H1 (cell line): ENCODE measurements at regions of chr3 and their contacts with region 1.

Region 1: DNA sequence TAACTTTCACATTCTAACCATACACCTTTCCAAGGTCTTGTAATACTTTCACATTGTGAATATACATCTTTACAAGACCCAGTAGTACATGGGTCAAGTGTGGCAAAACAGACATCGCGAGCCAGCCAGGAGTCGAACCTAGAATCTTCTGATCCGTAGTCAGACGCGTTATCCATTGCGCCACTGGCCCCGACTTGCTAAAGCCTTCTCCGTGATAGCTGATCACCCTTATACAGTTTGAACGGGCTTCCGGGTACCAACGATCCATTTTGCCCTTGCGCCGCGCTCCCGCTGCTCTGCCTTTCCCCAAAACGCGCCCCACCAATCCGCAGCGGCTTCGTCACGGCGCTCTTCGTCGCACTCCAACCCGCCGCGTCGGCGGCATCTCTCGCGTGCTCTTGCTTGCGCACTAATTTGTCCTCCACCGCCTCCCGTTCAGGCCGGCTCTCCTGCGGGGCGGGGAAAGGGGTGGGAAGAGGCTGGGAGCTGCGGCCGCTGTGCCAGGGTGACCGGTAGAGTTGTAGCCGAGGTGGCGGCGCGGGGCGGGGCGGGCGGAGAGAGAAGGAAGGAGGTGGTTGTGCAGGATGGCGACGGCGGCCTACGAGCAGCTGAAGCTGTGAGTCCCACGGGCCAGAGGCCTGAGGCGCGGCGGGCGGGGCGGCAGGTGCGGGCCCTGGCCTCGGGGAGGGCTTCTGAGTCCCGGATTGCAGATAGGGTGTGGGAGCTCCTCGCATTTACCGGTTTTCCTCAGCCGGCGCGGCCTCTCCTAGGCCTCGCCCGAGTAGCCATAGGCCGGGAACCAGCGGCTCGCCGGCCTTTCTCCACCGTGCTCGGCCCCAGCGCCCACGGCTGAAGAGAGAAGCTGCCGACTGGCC is at the start of gene SACM1L:
- DNase-seq: peak; percentile 97 to 98
- H3K4me3 ChIP-seq: peak within 1 kb of the TSS; percentile 61 to 87 (median 80)
- H3K27ac ChIP-seq: peak within 1 kb of the TSS; percentile 81
- H3K4me1 ChIP-seq: peaks cover 9 to 20% (median 10%) of the 10 kb centered on the region in 4 experiments; a peak in 6 of 7 replicates
- H3K27me3 ChIP-seq: no peaks in the 10 kb centered on the region
- CTCF ChIP-seq: no peak
- EP300 ChIP-seq: peak in 1 of 2 experiments; percentile 67; a peak in 1 of 3 replicates
- POLR2A ChIP-seq: peak in 1 of 2 experiments; percentile 73; a peak in 2 of 3 replicates
- RAD21 ChIP-seq: no peak
- total RNA-seq, gene SACM1L: 59.7 and 61.0 TPM in 2 replicates

Region 2: GRCh38 chr3:45507820-45508317 is 181.2 kb before region 1 on chr3:
- CTCF ChIA-PET with region 1: interaction called, 11 read pairs
- POLR2A ChIA-PET with region 1: interaction called, 4 read pairs
- DNase-seq: peak in 1 of 2 experiments; percentile 61
- H3K4me3 ChIP-seq: peak overlapping the region in 1 of 4 experiments; percentile 3; a peak in 1 of 8 replicates
- H3K27ac ChIP-seq: peak overlapping the region; percentile 37; the same call in 1 of the 2 replicates
- H3K4me1 ChIP-seq: peaks cover 11 to 32% (median 22%) of the 10 kb centered on the region in 4 experiments; a peak in 6 of 7 replicates
- H3K27me3 ChIP-seq: no peaks in the 10 kb centered on the region
- CTCF ChIP-seq: peak; percentile 39 to 55 (median 54)
- EP300 ChIP-seq: no peak
- POLR2A ChIP-seq: no peak
- RAD21 ChIP-seq: peak; percentile 22 to 47; a peak in 3 of 4 replicates

Region 3: GRCh38 chr3:45670991-45671390 is 18.1 kb before region 1 on chr3:
- CTCF ChIA-PET with region 1: interaction called, 5 read pairs
- POLR2A ChIA-PET with region 1: interaction called, 14 read pairs
- DNase-seq: no peak
- H3K4me3 ChIP-seq: no peak overlapping the region
- H3K27ac ChIP-seq: no peak overlapping the region
- H3K4me1 ChIP-seq: peaks cover 0 to 10% (median 3%) of the 10 kb centered on the region in 4 experiments; a peak in 4 of 7 replicates
- H3K27me3 ChIP-seq: no peaks in the 10 kb centered on the region
- CTCF ChIP-seq: no peak
- EP300 ChIP-seq: no peak
- POLR2A ChIP-seq: no peak
- RAD21 ChIP-seq: peak in 1 of 2 experiments; percentile 9; a peak in 1 of 4 replicates

Region 4: GRCh38 chr3:45677033-45677433 is 12.1 kb before region 1 on chr3:
- CTCF ChIA-PET with region 1: interaction called, 3 read pairs
- POLR2A ChIA-PET with region 1: interaction called, 14 read pairs
- DNase-seq: no peak
- H3K4me3 ChIP-seq: no peak overlapping the region
- H3K27ac ChIP-seq: no peak overlapping the region
- H3K4me1 ChIP-seq: peaks cover 8 to 19% (median 13%) of the 10 kb centered on the region in 4 experiments
- H3K27me3 ChIP-seq: no peaks in the 10 kb centered on the region
- CTCF ChIP-seq: no peak
- EP300 ChIP-seq: no peak
- POLR2A ChIP-seq: no peak
- RAD21 ChIP-seq: no peak

Region 5: DNA sequence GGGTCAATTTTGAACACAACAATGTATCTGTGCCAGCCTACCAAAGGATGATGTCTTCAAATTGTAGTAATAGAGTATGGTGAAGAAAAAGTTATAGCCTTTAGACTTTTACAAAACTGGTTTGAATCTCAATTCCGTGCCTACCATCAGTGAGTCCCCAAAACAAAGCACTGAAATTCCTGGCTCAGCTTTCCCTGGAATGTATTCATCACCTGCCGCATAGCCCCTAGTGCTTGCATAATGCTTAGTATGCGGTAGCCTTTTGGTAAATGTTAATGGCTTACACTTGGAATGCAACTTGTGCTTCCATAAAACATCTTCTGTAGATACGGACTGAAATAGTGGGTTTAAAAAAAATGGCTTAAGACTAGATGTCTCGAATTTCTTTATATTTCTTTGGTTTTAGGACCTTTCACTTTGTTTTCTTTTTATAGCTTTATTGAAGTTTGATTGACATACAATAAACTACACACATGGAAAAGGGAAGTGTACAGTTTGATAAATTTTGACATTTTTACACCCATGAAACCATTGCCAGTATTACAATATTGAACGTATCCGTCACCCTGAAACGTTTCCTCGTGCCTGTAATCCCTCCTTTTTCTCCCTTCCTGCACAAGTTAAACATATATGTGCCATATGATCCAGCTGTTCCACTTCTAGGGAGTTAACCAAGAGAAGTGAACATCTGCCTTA is 12.2 kb after region 1 on chr3:
- CTCF ChIA-PET with region 1: interaction called, 9 read pairs
- POLR2A ChIA-PET with region 1: interaction called, 88 read pairs
- DNase-seq: peak in 1 of 2 experiments; percentile 27
- H3K4me3 ChIP-seq: peak overlapping the region in 1 of 4 experiments; percentile 43; a peak in 2 of 8 replicates
- H3K27ac ChIP-seq: peak overlapping the region; percentile 36; the same call in 1 of the 2 replicates
- H3K4me1 ChIP-seq: peaks cover 2 to 22% (median 12%) of the 10 kb centered on the region in 4 experiments
- H3K27me3 ChIP-seq: no peaks in the 10 kb centered on the region
- CTCF ChIP-seq: no peak
- EP300 ChIP-seq: peak in 1 of 2 experiments; percentile 78; a peak in 2 of 3 replicates
- POLR2A ChIP-seq: peak in 1 of 2 experiments; percentile 54; a peak in 1 of 3 replicates
- RAD21 ChIP-seq: no peak